Gastrocnemius medialis (tissue), 4 donors: ENCODE measurements at regions of chr6 and their contacts with region 1.

Region 1: GRCh38 chr6:11496152-11497060 is 41.1 kb upstream of the TMEM170B start:
- DNase-seq: peak; percentile 25 to 43
- ATAC-seq: peak; percentile 91 to 92
- H3K4me3 ChIP-seq: no peak overlapping the region
- H3K27ac ChIP-seq: peak overlapping the region in 2 of 4 donors; percentile 25 to 53
- H3K4me1 ChIP-seq: no peaks in the 10 kb centered on the region
- H3K27me3 ChIP-seq: no peaks in the 10 kb centered on the region
- CTCF ChIP-seq: peak; percentile 78 to 88 (median 81)
- POLR2A ChIP-seq: no peak

Region 2: DNA sequence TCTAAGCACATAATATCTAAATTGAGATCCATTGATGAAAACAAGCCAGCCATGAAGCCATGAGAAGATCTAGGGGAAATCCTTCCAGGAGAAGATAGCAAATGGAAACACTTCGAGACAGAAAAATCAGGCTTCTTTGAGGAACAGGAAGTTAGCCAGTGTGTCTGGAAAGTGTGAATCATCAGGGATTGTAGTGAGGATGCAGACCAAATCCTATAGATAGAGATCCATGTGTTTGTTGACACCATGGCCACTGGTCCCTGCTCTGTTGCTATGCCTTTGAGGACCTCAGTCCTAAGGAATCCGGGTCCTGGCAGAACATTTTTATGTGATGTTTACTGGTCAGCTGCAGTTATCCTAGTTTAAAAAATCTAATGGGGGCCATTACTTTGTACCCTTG is 445.7 kb before region 1 on chr6:
- in situ Hi-C with region 1: no loop called
- intact Hi-C with region 1: no loop called
- DNase-seq: no peak
- ATAC-seq: no peak
- H3K4me3 ChIP-seq: no peak overlapping the region
- H3K27ac ChIP-seq: no peak overlapping the region
- H3K4me1 ChIP-seq: no peaks in the 10 kb centered on the region
- H3K27me3 ChIP-seq: peaks cover 21 to 29% (median 24%) of the 10 kb centered on the region in 3 donors
- CTCF ChIP-seq: no peak
- POLR2A ChIP-seq: no peak

Region 3: DNA sequence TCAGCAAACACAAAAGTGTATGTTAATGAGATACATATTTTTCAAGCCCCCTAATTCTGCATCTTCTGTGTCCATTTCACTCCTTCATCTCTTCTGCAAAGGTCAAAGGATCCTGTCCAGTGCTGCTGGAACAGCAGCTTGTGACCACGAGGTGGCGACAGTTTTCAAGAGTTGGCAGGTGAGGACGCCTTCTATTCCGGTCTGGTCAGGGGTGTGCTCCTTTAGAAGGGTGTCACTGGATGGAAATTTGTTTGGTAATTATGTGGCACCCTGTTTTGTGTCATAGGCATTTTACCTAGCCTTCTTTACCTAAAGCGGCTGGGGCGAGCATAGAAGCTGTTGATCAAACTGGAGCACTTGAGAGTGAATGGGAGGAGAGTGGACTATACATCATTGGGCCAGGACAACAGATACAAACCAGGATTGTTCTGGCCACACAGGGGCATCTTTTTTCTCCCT is 352.0 kb before region 1 on chr6:
- in situ Hi-C with region 1: loop called in 3 of 4 experiments (anchors 5 to 10 kb)
- intact Hi-C with region 1: loop called (anchors 1 kb)
- DNase-seq: peak; percentile 53 to 55
- ATAC-seq: peak; percentile 92
- H3K4me3 ChIP-seq: no peak overlapping the region
- H3K27ac ChIP-seq: no peak overlapping the region
- H3K4me1 ChIP-seq: no peaks in the 10 kb centered on the region
- H3K27me3 ChIP-seq: no peaks in the 10 kb centered on the region
- CTCF ChIP-seq: peak; percentile 66 to 88 (median 77)
- POLR2A ChIP-seq: no peak

Region 4: DNA sequence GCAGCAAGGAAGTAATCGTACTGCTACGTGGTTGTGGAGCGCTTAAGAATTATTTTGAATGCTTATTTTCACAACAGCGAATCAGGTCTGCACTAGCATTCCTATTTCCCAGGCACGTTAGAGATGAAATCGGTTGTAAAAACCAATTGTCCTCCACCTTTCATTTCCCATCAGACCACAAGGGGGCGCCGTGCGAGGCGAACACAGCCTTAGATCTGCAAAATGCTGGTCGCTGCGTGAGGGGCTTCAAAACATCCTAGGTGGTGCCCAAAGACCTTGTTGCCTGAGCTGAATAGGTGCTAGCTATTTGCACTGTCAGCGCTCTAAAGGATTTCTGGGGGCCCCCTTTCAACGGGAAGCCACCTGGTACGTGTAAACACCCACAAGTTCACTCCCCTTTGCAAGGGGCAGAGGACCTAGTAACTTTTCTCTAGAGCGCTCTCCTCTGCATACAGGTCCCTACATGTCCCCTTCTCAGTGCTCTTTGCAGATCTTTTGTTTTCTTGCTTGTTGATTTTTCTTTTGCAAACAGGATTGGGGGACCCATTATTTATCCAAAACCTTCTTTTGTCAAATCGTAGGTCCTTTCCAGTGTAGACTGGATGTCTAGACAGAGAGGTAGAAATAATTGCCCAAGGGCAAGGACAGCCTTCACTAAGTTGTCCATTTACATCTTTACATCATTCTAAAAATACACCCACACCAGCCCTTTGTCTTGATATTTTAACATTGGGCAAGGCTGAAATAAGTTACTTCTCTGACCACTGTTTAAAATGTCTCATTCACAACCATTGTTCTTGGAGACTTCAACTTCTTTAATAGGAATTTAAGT is 323.7 kb before region 1 on chr6:
- in situ Hi-C with region 1: loop called in 3 of 4 experiments (anchors 10 kb)
- intact Hi-C with region 1: loop called (anchors 1 kb)
- DNase-seq: peak in 1 of 2 donors; percentile 11
- ATAC-seq: peak in 1 of 2 donors; percentile 50
- H3K4me3 ChIP-seq: no peak overlapping the region
- H3K27ac ChIP-seq: no peak overlapping the region
- H3K4me1 ChIP-seq: peaks cover 0 to 5% of the 10 kb centered on the region in 2 donors
- H3K27me3 ChIP-seq: no peaks in the 10 kb centered on the region
- CTCF ChIP-seq: peak; percentile 63 to 85 (median 76)
- POLR2A ChIP-seq: no peak

Region 5: DNA sequence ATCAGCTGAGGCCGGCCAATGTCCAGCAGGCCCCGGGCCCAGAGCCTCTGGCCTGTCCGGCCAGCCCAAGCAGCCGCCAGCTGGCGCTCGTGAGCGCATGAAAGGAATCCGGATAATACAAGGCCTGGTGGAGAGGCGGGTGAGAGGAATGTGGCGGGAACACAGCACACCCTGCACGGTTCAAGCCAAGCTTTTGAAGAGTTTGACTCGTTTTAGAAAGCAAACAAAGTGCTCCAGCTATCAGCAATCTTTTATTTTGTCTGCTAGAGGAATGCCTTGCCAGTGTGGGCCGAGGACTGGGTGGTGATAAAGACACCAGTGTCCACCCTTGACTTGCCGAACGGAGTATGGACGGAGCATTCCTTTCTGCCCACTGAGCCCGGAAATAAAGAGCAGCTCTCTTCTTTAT is 254.6 kb before region 1 on chr6:
- in situ Hi-C with region 1: no loop called
- intact Hi-C with region 1: loop called (anchors 1 kb)
- DNase-seq: peak in 1 of 2 donors; percentile 35
- ATAC-seq: no peak
- H3K4me3 ChIP-seq: no peak overlapping the region
- H3K27ac ChIP-seq: no peak overlapping the region
- H3K4me1 ChIP-seq: no peaks in the 10 kb centered on the region
- H3K27me3 ChIP-seq: no peaks in the 10 kb centered on the region
- CTCF ChIP-seq: peak; percentile 31 to 61 (median 34)
- POLR2A ChIP-seq: no peak